GM12878 (cell line): ENCODE measurements at regions of chr6 and their contacts with region 1.

Region 1: GRCh38 chr6:65924413-65924812 is 217.4 kb upstream of the EYS start:
- DNase-seq: no peak
- ATAC-seq: no peak
- H3K4me3 ChIP-seq: no peak overlapping the region
- H3K27ac ChIP-seq: no peak overlapping the region
- H3K4me1 ChIP-seq: no peaks in the 10 kb centered on the region
- H3K27me3 ChIP-seq: no peaks in the 10 kb centered on the region
- CTCF ChIP-seq: no peak
- EP300 ChIP-seq: no peak
- POLR2A ChIP-seq: no peak
- RAD21 ChIP-seq: no peak

Region 2: DNA sequence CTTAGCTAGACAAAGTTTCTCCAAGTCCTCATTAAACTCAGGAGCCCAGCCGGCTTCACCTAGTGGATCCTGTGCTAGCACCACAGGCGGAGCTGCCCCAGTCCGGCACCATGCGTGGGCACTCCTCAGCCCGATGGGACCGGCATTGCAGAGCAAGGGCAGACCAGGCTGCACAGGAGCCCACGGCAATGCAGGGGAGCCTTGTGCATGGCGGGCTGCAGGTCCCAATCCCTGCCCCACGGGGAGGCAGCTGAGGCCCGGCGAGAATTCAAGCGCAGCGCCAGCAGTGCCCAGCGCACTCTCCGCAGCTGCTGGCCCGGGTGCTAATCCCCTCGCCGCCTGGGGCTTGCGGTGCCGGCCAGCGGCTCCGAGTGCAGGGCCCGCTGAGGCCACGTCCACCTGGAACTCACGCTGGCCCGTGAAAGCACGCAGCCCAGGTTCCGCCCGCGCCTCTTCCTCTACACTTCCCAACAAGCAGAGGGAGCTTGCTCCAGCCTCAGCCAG is 74.9 kb after region 1 on chr6:
- CTCF ChIA-PET with region 1: no interaction called
- POLR2A ChIA-PET with region 1: no interaction called
- RAD21 ChIA-PET with region 1: no interaction called
- SMC1A ChIA-PET with region 1: interaction called, 3 read pairs
- in situ Hi-C with region 1: no loop called
- intact Hi-C with region 1: loop called (anchors 5 kb)
- DNase-seq: no peak
- ATAC-seq: no peak
- H3K4me3 ChIP-seq: no peak overlapping the region
- H3K27ac ChIP-seq: no peak overlapping the region
- H3K4me1 ChIP-seq: no peaks in the 10 kb centered on the region
- H3K27me3 ChIP-seq: no peaks in the 10 kb centered on the region
- CTCF ChIP-seq: no peak
- EP300 ChIP-seq: no peak
- POLR2A ChIP-seq: no peak
- RAD21 ChIP-seq: no peak